ENCODE measurements at regions of chr6 and their contacts with region 1.

Region 1: GRCh38 chr6:2988426-2989331 is 11.0 kb upstream of the NQO2 start:
- DNase-seq: peak; percentile 82 to 88
- H3K4me3 ChIP-seq: peak overlapping the region; percentile 82 to 96 (median 95)
- H3K27ac ChIP-seq: peak overlapping the region; percentile 98
- H3K4me1 ChIP-seq: no peaks in the 10 kb centered on the region
- H3K27me3 ChIP-seq: no peaks in the 10 kb centered on the region
- CTCF ChIP-seq: peak; percentile 71 to 89 (median 87)
- POLR2A ChIP-seq: no peak

Region 2: DNA sequence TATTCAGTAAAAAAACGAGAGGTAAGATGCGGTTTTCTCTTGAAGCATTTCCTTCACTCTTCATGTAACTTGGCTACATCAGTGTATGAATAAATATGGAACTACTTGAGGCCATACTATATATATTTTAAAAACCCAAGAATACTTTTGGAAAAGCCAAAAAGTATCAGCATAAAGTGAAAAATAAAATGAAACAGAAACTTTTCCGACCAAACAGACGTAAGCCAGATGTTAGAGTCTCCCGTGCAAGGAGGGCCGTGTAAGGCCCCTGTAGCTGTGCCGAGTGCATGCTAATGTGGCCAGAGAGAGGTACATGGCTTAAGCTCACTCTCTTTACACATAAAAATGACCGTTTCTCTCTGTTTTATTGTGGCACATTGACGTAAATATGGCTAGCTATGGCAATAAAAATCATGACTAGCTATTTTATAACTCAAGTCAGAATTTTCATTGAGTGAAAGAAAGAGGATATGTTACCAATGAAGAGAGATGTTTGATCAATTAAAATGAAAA is 603.2 kb before region 1 on chr6:
- intact Hi-C with region 1: no loop called
- DNase-seq: no peak
- H3K4me3 ChIP-seq: no peak overlapping the region
- H3K27ac ChIP-seq: no peak overlapping the region
- H3K4me1 ChIP-seq: no peaks in the 10 kb centered on the region
- H3K27me3 ChIP-seq: no peaks in the 10 kb centered on the region
- CTCF ChIP-seq: no peak
- POLR2A ChIP-seq: no peak

Region 3: GRCh38 chr6:2848851-2849250 is 139.8 kb before region 1 on chr6:
- intact Hi-C with region 1: loop called (anchors 2 kb)
- DNase-seq: no peak
- H3K4me3 ChIP-seq: no peak overlapping the region
- H3K27ac ChIP-seq: no peak overlapping the region
- H3K4me1 ChIP-seq: peaks cover 0 to 3% of the 10 kb centered on the region in 2 donors
- H3K27me3 ChIP-seq: no peaks in the 10 kb centered on the region
- CTCF ChIP-seq: no peak
- POLR2A ChIP-seq: no peak

Region 4: DNA sequence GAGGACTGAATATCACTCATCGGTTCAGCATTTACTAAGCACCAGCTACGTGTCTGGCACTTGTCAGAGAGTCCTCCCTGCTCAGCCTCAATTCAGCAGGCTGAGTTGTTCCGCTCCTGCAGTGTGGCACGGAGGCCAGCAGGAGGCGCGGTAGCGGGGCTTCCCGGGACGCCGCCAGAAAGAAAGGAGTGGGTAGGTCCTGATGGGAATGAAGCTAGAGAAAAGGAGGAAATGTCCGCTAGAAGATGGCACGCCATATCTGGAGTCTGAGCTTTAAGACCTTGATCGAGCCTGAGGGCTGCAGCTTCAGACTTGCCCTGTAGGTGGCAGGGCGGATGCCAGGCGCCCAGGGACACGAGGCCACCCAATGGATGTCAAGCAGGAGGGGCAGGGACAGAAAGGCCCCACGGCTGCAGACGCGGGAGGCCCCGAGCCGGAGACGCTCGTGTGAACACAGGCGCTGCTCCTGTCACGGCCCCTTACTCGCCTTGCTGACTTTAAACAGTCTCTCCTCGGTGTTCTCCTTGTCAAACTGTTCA is 36.1 kb before region 1 on chr6:
- intact Hi-C with region 1: no loop called
- DNase-seq: peak in 1 of 2 donors; percentile 69
- H3K4me3 ChIP-seq: no peak overlapping the region
- H3K27ac ChIP-seq: peak overlapping the region in 1 of 2 donors; percentile 27
- H3K4me1 ChIP-seq: peaks cover 0 to 5% of the 10 kb centered on the region in 2 donors
- H3K27me3 ChIP-seq: no peaks in the 10 kb centered on the region
- CTCF ChIP-seq: peak; percentile 72 to 94 (median 82)
- POLR2A ChIP-seq: no peak

Region 5: DNA sequence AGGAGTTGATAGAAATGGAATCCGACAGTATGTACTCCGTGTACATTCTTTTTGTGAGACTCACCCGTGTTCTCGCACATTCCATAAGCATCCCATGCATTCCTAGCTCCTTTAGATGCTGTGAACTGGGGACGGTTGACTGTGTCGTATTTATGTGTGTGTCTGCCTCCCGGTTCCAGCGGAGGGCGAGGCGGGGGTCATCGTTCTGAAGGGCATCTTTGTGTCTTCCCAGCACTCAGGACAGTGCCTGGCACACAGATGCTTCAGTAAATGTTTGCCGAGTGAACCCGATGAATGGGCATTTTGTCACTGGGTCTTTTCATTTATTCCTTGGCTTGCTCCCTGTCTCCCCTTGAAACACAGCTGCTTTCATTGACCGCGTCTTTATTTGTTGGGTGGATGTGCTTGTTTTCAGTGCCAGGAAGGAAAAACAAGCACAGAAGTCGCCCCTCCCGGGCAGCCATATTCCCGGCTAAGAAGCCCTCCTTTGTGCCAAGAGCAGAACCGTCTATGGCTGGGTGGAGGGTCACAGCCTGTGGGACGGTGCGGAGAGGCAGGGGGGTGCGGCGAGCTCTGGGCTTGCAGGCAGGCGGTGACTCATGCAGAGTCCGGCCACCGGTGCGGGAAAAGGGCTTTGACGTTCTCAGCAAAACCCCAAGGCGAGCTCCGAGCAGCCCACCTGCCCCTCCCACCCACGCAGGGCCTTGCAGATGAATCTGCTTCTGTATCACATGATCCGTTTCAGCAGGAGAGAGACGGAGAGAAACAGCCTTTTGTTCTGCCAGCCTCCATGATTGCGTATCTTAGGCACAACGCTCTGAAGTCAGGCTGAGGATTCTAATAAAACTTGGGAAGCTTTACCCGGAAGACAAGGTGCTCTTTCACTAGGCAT is 258.8 kb after region 1 on chr6:
- intact Hi-C with region 1: loop called (anchors 10 kb)
- DNase-seq: peak in 1 of 2 donors; percentile 62
- H3K4me3 ChIP-seq: peak overlapping the region; percentile 24 to 68 (median 43)
- H3K27ac ChIP-seq: peak overlapping the region; percentile 49 to 62
- H3K4me1 ChIP-seq: no peaks in the 10 kb centered on the region
- H3K27me3 ChIP-seq: no peaks in the 10 kb centered on the region
- CTCF ChIP-seq: no peak
- POLR2A ChIP-seq: no peak

Measured in breast epithelium (tissue), 4 donors.